ENCODE measurements at regions of chr22 and their contacts with region 1.

Region 1: GRCh38 chr22:40346178-40347118 is at the start of gene ADSL:
- DNase-seq: peak; percentile 91
- H3K4me3 Mint-ChIP-seq: peak within 1 kb of the TSS; percentile 94
- H3K27ac Mint-ChIP-seq: peak within 1 kb of the TSS; percentile 96
- H3K4me1 Mint-ChIP-seq: peaks cover 46% of the 10 kb centered on the region
- H3K27me3 Mint-ChIP-seq: no peaks in the 10 kb centered on the region
- total RNA-seq, gene ADSL: 125 to 129 TPM

Region 2: GRCh38 chr22:39927544-39927943 is 418.9 kb before region 1 on chr22:
- CTCF ChIA-PET with region 1: interaction called, 3 read pairs
- intact Hi-C with region 1: loop called (anchors 5 kb)
- DNase-seq: peak; percentile 69
- H3K4me3 Mint-ChIP-seq: no peak overlapping the region
- H3K27ac Mint-ChIP-seq: no peak overlapping the region
- H3K4me1 Mint-ChIP-seq: peaks cover 33% of the 10 kb centered on the region
- H3K27me3 Mint-ChIP-seq: no peaks in the 10 kb centered on the region

Region 3: GRCh38 chr22:40055143-40055883 is 291.1 kb before region 1 on chr22:
- CTCF ChIA-PET with region 1: interaction called, 5 read pairs
- intact Hi-C with region 1: loop called (anchors 2 kb)
- DNase-seq: peak; percentile 28
- H3K4me3 Mint-ChIP-seq: peak overlapping the region; percentile 69
- H3K27ac Mint-ChIP-seq: peak overlapping the region; percentile 95
- H3K4me1 Mint-ChIP-seq: peaks cover 80% of the 10 kb centered on the region
- H3K27me3 Mint-ChIP-seq: no peaks in the 10 kb centered on the region

Region 4: DNA sequence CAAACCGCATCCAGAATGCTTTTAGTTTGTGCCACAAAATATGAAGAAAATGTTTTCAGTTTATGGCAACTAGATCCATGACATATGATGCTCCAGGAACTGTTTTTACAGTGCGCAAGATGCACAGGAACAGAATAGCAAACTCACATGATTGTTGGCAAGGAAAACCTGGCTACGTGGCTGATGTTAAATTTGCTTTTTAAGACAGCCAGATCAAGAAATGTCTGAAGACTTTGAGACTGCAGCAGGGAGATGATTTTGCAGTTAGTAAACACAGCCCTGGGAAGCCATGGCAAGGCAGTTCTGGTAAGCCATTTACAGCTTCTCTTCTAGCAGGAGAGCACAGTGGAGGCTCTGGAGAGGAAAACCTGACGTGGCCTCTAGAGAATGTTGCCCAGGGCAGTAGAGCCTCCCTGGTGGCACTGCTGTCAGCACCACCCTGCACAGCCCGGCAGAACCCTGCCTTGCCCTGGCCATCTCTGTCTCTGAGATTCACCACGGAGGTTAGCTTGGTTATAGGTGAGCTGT is 238.5 kb before region 1 on chr22:
- CTCF ChIA-PET with region 1: no interaction called
- intact Hi-C with region 1: no loop called
- DNase-seq: peak; percentile 55
- H3K4me3 Mint-ChIP-seq: peak overlapping the region; percentile 66
- H3K27ac Mint-ChIP-seq: peak overlapping the region; percentile 87
- H3K4me1 Mint-ChIP-seq: peaks cover 81% of the 10 kb centered on the region
- H3K27me3 Mint-ChIP-seq: no peaks in the 10 kb centered on the region

Region 5: GRCh38 chr22:40203572-40203971 is 142.9 kb before region 1 on chr22:
- CTCF ChIA-PET with region 1: interaction called, 3 read pairs
- intact Hi-C with region 1: loop called (anchors 2 kb)
- DNase-seq: peak; percentile 65
- H3K4me3 Mint-ChIP-seq: peak overlapping the region; percentile 56
- H3K27ac Mint-ChIP-seq: peak overlapping the region; percentile 87
- H3K4me1 Mint-ChIP-seq: peaks cover 68% of the 10 kb centered on the region
- H3K27me3 Mint-ChIP-seq: no peaks in the 10 kb centered on the region

Region 6: GRCh38 chr22:40289991-40290459 is 56.4 kb before region 1 on chr22:
- CTCF ChIA-PET with region 1: interaction called, 8 read pairs
- intact Hi-C with region 1: loop called (anchors 1 kb)
- DNase-seq: peak; percentile 86
- H3K4me3 Mint-ChIP-seq: peak overlapping the region; percentile 68
- H3K27ac Mint-ChIP-seq: peak overlapping the region; percentile 95
- H3K4me1 Mint-ChIP-seq: peaks cover 67% of the 10 kb centered on the region
- H3K27me3 Mint-ChIP-seq: no peaks in the 10 kb centered on the region

Region 7: DNA sequence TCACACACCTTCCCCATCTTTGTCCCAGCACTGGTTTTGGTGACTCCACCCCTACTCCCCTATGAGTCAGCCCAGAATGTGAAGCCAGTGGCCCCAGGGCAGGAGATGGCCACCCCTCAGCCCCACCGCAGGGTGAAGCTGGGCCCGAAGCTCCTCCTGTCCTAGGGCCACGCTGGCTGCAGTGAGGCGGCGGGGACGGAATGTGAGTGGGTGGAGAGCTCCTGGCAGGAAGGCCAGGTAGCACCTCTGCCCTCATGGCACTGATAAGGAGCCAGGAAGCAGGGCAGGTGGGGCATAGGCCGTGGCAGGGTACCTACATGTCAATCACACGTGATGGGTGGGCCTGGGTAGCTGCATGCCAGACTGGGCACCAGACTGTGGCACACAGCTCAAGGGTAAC is 63.9 kb after region 1 on chr22:
- CTCF ChIA-PET with region 1: no interaction called
- intact Hi-C with region 1: no loop called
- DNase-seq: no peak
- H3K4me3 Mint-ChIP-seq: no peak overlapping the region
- H3K27ac Mint-ChIP-seq: no peak overlapping the region
- H3K4me1 Mint-ChIP-seq: peaks cover 4% of the 10 kb centered on the region
- H3K27me3 Mint-ChIP-seq: no peaks in the 10 kb centered on the region

Region 8: GRCh38 chr22:40519284-40519947 is 173.0 kb after region 1 on chr22:
- CTCF ChIA-PET with region 1: no interaction called
- intact Hi-C with region 1: no loop called
- DNase-seq: no peak
- H3K4me3 Mint-ChIP-seq: peak overlapping the region; percentile 67
- H3K27ac Mint-ChIP-seq: peak overlapping the region; percentile 94
- H3K4me1 Mint-ChIP-seq: peaks cover 37% of the 10 kb centered on the region
- H3K27me3 Mint-ChIP-seq: no peaks in the 10 kb centered on the region